ENCODE measurements at regions of chr6 and their contacts with region 1.

Region 1: GRCh38 chr6:121055572-121056163 is 278.6 kb downstream of the TBC1D32 start:
- DNase-seq: no peak
- H3K4me3 ChIP-seq: no peak overlapping the region
- H3K27ac ChIP-seq: no peak overlapping the region
- H3K4me1 ChIP-seq: peaks cover 0 to 3% (median 0%) of the 10 kb centered on the region in 6 donors
- H3K27me3 ChIP-seq: no peaks in the 10 kb centered on the region
- CTCF ChIP-seq: peak in 9 of 11 experiments; percentile 29 to 67 (median 53)
- POLR2A ChIP-seq: no peak

Region 2: DNA sequence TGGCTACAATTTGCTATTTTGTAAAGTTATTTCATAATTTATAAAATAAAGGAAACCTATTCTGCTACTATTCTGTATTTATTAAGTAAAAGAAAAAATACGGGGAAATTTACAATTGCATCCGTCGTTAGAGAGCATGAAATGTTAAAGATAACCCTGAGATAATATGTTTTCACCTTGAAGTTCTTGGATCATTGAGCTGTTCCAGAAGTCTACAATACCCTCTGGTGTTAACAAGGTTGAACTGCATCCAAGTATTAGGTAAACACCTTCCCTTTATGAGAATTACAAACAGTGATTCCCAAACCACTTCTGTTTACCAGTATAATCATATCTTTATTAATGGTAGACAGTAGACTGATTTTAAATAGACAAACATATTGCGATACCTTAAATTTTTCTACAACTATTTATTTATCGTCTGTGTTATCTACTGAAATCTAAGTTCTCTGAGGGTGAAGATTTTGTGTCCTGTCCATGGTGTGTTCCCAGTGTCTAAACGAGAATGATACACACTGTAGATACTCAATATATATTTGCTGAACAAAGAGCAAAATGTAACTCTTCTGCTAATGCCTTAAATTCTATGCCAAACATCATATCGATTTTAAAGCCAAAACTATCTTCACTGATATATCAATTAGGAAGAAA is 250.4 kb after region 1 on chr6:
- intact Hi-C with region 1: loop called (anchors 10 kb)
- DNase-seq: no peak
- H3K4me3 ChIP-seq: no peak overlapping the region
- H3K27ac ChIP-seq: no peak overlapping the region
- H3K4me1 ChIP-seq: no peaks in the 10 kb centered on the region
- H3K27me3 ChIP-seq: no peaks in the 10 kb centered on the region
- CTCF ChIP-seq: peak in 8 of 11 experiments; percentile 31 to 62 (median 52)
- POLR2A ChIP-seq: no peak

Measured in spleen (tissue), 13 donors.